Activated CD4-positive, alpha-beta T cell treated with anti-CD3 and anti-CD28 coated beads for 36 hours (primary cell): ENCODE measurements at regions of chr20 and their contacts with region 1.

Region 1: GRCh38 chr20:32945710-32946221 is 58.5 kb downstream of the SUN5 start:
- DNase-seq: peak; percentile 45
- ATAC-seq: peak; percentile 93
- H3K4me3 Mint-ChIP-seq: no peak overlapping the region
- H3K27ac Mint-ChIP-seq: peak overlapping the region; percentile 64
- H3K4me1 Mint-ChIP-seq: peaks cover 36% of the 10 kb centered on the region
- H3K27me3 Mint-ChIP-seq: no peaks in the 10 kb centered on the region

Region 2: DNA sequence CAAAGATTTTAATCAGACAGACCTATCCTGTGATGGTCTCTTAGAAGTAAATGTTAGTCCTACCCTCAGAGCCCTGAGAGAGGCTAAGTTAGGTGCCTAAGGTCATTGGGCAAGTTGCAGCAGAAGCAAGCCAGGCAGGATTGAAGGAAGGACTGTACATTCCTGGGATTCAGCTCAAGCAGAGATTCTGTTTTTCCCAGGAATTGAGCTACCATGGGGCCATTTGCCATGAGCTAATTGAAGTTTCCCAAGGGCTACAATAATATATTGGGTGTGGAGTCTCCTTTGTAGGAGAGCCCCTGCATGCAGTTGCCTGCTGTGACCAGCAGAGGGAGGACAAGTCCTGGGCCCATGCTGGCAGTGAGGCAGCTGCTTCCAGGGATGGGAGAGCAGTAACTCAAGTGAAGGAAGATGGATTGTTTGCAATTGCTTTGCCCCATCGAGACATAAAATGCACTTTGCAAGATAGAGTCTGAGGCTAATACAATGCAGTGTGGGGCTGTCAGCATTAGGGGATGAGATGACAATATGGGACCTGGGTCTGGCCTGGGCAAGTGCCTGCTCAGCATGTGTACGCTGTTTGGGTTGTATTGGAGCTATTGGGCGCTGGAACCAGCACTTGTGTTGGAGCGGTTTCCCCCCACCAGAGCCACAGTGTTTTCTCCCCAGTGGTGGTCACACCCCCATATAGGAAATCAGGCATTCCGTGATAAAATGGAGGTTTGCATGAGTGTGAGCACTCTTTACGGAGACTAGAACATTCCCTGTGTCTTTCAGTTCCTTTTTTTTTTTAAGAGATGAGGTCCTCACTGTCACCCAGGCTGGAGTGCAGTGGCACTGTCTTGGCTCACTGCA is 155.6 kb before region 1 on chr20:
- CTCF ChIA-PET with region 1: interaction called, 5 read pairs
- POLR2A ChIA-PET with region 1: no interaction called
- intact Hi-C with region 1: loop called (anchors 1 kb)
- DNase-seq: peak; percentile 85
- ATAC-seq: peak; percentile 71
- H3K4me3 Mint-ChIP-seq: no peak overlapping the region
- H3K27ac Mint-ChIP-seq: no peak overlapping the region
- H3K4me1 Mint-ChIP-seq: peaks cover 32% of the 10 kb centered on the region
- H3K27me3 Mint-ChIP-seq: no peaks in the 10 kb centered on the region

Region 3: GRCh38 chr20:32918296-32918695 is 27.5 kb before region 1 on chr20:
- CTCF ChIA-PET with region 1: interaction called, 11 read pairs
- POLR2A ChIA-PET with region 1: no interaction called
- intact Hi-C with region 1: no loop called
- DNase-seq: no peak
- ATAC-seq: no peak
- H3K4me3 Mint-ChIP-seq: no peak overlapping the region
- H3K27ac Mint-ChIP-seq: no peak overlapping the region
- H3K4me1 Mint-ChIP-seq: no peaks in the 10 kb centered on the region
- H3K27me3 Mint-ChIP-seq: no peaks in the 10 kb centered on the region

Region 4: GRCh38 chr20:32972181-32973076 is 26.7 kb after region 1 on chr20:
- CTCF ChIA-PET with region 1: interaction called, 13 read pairs
- POLR2A ChIA-PET with region 1: interaction called, 4 read pairs
- intact Hi-C with region 1: loop called in 1 of 2 experiments (anchors 1 kb)
- DNase-seq: peak; percentile 88
- ATAC-seq: peak; percentile 70
- H3K4me3 Mint-ChIP-seq: no peak overlapping the region
- H3K27ac Mint-ChIP-seq: no peak overlapping the region
- H3K4me1 Mint-ChIP-seq: peaks cover 46% of the 10 kb centered on the region
- H3K27me3 Mint-ChIP-seq: no peaks in the 10 kb centered on the region

Region 5: DNA sequence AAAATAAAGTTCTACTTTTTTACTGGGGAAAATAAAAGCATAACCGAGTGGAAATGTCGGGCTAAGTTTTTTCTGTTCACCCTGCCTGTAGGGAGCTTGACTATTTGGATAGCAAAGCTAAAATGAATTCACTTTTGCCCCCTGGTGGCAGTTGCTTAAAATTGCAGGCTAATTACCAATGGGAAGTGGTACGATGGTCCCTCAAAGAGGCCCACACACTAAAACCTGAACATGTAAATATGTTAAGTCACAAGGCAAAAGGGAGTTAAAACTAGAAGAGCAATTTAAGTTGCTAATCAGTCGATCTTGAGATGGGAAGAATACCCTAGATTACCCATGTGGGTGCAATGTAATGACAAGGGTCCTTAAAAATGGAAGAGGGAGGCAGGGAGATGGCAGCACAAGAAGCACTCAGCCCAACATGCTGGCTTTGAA is 59.4 kb after region 1 on chr20:
- CTCF ChIA-PET with region 1: interaction called, 25 read pairs
- POLR2A ChIA-PET with region 1: no interaction called
- intact Hi-C with region 1: loop called (anchors 1 to 10 kb)
- DNase-seq: peak; percentile 59
- ATAC-seq: peak; percentile 78
- H3K4me3 Mint-ChIP-seq: no peak overlapping the region
- H3K27ac Mint-ChIP-seq: no peak overlapping the region
- H3K4me1 Mint-ChIP-seq: peaks cover 14% of the 10 kb centered on the region
- H3K27me3 Mint-ChIP-seq: no peaks in the 10 kb centered on the region